ENCODE measurements at regions of chr12 and their contacts with region 1.

Region 1: GRCh38 chr12:110776410-110776809 is 33.7 kb upstream of the PPP1CC start:
- DNase-seq: peak; percentile 84
- H3K4me3 Mint-ChIP-seq: peak overlapping the region; percentile 34
- H3K27ac Mint-ChIP-seq: peak overlapping the region; percentile 94
- H3K4me1 Mint-ChIP-seq: peaks cover 69% of the 10 kb centered on the region
- H3K27me3 Mint-ChIP-seq: no peaks in the 10 kb centered on the region

Region 2: DNA sequence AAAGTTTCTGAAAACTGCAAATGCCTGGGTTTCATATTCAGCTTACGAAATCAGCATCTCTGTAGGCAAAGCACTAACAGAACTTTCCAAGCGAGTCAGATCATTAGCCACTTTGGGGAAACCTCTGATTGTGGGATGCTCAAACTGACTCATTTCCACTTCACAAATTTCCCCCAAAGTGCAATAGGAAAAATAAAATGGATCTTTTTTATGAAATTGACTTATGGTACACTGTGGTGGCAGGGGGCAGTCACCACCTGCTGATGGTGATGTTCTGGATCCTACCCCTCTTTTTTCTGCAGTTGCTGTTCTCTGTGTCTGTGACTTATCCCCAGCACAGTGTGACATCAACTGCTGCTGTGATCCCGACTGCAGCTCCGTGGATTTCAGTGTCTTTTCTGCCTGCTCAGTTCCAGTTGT is 156.9 kb before region 1 on chr12:
- CTCF ChIA-PET with region 1: interaction called, 4 read pairs
- POLR2A ChIA-PET with region 1: interaction called, 9 read pairs
- intact Hi-C with region 1: loop called (anchors 1 kb)
- DNase-seq: peak; percentile 69
- H3K4me3 Mint-ChIP-seq: no peak overlapping the region
- H3K27ac Mint-ChIP-seq: peak overlapping the region; percentile 71
- H3K4me1 Mint-ChIP-seq: peaks cover 15% of the 10 kb centered on the region
- H3K27me3 Mint-ChIP-seq: no peaks in the 10 kb centered on the region

Region 3: DNA sequence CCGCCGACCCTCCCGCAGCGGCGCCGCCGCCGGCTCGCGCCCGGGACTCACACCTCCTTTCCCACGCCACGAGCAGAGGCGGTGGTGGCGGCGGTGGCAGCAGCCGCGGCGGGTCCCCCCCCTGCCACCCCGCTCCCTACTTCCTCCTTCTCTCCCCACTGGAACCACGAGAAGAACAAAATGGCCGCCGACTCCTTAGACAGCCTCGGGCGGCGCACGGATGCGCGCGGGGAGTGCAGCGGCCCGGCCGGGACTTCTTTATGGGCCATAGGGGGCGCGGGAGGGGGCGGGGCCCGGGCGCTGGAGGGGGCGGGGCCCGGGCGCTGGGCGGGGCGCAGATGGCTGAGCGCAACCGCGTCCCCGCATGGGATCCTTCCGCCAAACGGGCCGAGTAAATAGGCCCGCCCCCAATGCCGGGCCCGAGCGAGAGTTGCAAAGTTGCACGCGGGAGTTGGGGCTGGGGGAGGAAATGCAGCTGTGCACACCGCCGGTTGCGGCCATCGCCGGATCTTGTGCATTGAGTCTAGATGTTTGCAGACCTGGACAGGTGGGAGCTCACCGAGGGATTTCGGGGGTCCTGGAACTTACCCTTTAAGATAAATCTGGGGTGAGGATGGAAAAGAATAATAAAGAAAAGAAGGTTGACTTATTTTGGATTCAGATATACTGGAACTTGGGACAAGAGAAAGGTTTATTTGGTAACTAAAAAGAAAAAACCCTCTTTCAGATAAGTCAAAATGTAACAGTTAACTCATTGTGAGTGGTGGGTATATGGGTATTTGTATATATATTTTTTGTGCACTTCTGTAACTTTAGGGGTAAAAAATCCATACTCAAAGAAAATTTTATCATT is 33.5 kb before region 1 on chr12 and contains the start of gene PPP1CC:
- CTCF ChIA-PET with region 1: interaction called, 30 read pairs
- POLR2A ChIA-PET with region 1: interaction called, 46 read pairs
- intact Hi-C with region 1: loop called (anchors 1 kb)
- DNase-seq: peak; percentile 94
- H3K4me3 Mint-ChIP-seq: peak within 1 kb of the TSS; percentile 99
- H3K27ac Mint-ChIP-seq: peak within 1 kb of the TSS; percentile 99
- H3K4me1 Mint-ChIP-seq: peaks cover 34% of the 10 kb centered on the region
- H3K27me3 Mint-ChIP-seq: no peaks in the 10 kb centered on the region
- total RNA-seq, gene PPP1CC: 334 to 343 TPM

Region 4: GRCh38 chr12:110760204-110760609 is 16.2 kb before region 1 on chr12:
- CTCF ChIA-PET with region 1: no interaction called
- POLR2A ChIA-PET with region 1: interaction called, 3 read pairs
- intact Hi-C with region 1: loop called (anchors 1 kb)
- DNase-seq: peak; percentile 52
- H3K4me3 Mint-ChIP-seq: no peak overlapping the region
- H3K27ac Mint-ChIP-seq: peak overlapping the region; percentile 19
- H3K4me1 Mint-ChIP-seq: peaks cover 24% of the 10 kb centered on the region
- H3K27me3 Mint-ChIP-seq: no peaks in the 10 kb centered on the region

Region 5: DNA sequence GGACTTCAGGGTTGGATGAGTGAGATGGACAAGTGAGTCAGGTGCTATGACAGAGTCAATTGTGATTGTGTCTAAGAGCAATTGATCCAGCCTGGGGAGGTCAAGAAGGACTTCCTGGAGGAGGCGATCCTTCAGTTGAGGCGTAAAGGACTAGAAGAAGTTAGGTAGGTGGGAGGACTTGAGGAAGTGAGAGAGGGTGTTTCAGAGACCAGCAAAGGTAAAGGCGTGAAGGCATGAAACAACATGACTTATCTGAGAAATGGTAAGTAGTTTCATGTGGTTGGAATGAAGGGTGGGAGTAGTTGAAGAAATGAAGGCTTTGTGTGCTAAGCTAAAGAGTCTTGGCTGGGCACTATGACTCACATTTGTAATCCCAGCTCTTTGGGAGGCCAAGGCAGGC is 15.2 kb after region 1 on chr12:
- CTCF ChIA-PET with region 1: no interaction called
- POLR2A ChIA-PET with region 1: interaction called, 3 read pairs
- intact Hi-C with region 1: loop called (anchors 1 kb)
- DNase-seq: no peak
- H3K4me3 Mint-ChIP-seq: no peak overlapping the region
- H3K27ac Mint-ChIP-seq: peak overlapping the region; percentile 16
- H3K4me1 Mint-ChIP-seq: peaks cover 11% of the 10 kb centered on the region
- H3K27me3 Mint-ChIP-seq: no peaks in the 10 kb centered on the region

Region 6: GRCh38 chr12:111434680-111435338 is 658.4 kb after region 1 on chr12:
- CTCF ChIA-PET with region 1: no interaction called
- POLR2A ChIA-PET with region 1: no interaction called
- intact Hi-C with region 1: loop called (anchors 10 kb)
- DNase-seq: peak; percentile 91
- H3K4me3 Mint-ChIP-seq: peak overlapping the region; percentile 61
- H3K27ac Mint-ChIP-seq: peak overlapping the region; percentile 92
- H3K4me1 Mint-ChIP-seq: peaks cover 89% of the 10 kb centered on the region
- H3K27me3 Mint-ChIP-seq: no peaks in the 10 kb centered on the region